ENCODE measurements at regions of chr5 and their contacts with region 1.

Region 1: GRCh38 chr5:167147879-167148278 is 1143.6 kb upstream of the WWC1 start:
- DNase-seq: no peak
- H3K4me3 Mint-ChIP-seq: no peak overlapping the region
- H3K27ac Mint-ChIP-seq: no peak overlapping the region
- H3K4me1 Mint-ChIP-seq: no peaks in the 10 kb centered on the region
- H3K27me3 Mint-ChIP-seq: no peaks in the 10 kb centered on the region

Region 2: GRCh38 chr5:167122267-167122666 is 25.6 kb before region 1 on chr5:
- CTCF ChIA-PET with region 1: no interaction called
- POLR2A ChIA-PET with region 1: no interaction called
- intact Hi-C with region 1: loop called (anchors 1 kb)
- DNase-seq: no peak
- H3K4me3 Mint-ChIP-seq: no peak overlapping the region
- H3K27ac Mint-ChIP-seq: no peak overlapping the region
- H3K4me1 Mint-ChIP-seq: no peaks in the 10 kb centered on the region
- H3K27me3 Mint-ChIP-seq: no peaks in the 10 kb centered on the region

Measured in activated CD4-positive, alpha-beta memory T cell treated with anti-CD3 and anti-CD28 coated beads for 36 hours (primary cell).